OCI-LY7 (cell line): ENCODE measurements at regions of chr7 and their contacts with region 1.

Region 1: GRCh38 chr7:2837496-2837895 is 6.6 kb downstream of the GNA12 start:
- DNase-seq: no peak
- H3K4me3 ChIP-seq: peak overlapping the region; percentile 51
- H3K27ac ChIP-seq: peak overlapping the region; percentile 89
- H3K4me1 ChIP-seq: peaks cover 52% of the 10 kb centered on the region
- CTCF ChIP-seq: no peak

Region 2: DNA sequence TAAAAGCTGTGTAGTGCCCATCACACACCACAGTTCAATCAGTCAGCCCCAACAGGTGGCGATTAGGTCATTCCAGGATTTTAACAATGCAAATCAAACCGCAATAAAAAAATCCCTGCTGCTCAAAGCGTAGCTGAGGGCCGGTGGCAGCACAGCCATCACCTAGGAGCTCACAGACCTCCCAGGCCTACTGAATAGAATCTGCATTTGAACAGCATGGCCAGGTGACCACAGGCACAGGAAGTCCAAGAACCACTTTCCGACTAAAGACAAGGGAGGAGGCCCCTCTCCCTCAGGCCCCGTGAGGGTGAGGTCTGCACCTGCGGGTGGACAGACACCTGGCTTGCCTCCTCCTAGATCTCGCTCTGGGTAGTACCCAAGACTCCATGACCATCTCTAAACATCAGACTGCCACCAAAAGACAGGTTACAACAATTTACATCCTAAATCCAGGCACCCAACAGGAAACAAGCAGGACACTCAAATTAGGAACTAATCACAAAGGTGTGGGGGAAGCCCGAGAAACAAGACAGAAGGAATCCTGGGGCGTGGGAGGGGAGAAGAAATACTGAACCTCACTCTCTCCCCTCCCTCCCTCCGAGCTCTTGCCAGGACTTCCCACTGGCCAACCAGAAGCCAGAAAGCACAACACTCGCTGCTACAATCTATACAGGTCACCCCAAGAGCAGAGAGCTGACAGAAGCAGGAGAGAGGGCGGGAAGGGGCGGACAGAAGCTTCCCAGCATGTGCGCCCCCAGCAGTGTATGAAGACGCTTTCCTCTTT is 12.6 kb before region 1 on chr7:
- CTCF ChIA-PET with region 1: interaction called, 3 read pairs
- POLR2A ChIA-PET with region 1: interaction called, 6 read pairs
- intact Hi-C with region 1: loop called (anchors 1 kb)
- DNase-seq: peak; percentile 85
- H3K4me3 ChIP-seq: peak overlapping the region; percentile 42
- H3K27ac ChIP-seq: peak overlapping the region; percentile 82
- H3K4me1 ChIP-seq: peaks cover 68% of the 10 kb centered on the region
- CTCF ChIP-seq: no peak

Region 3: DNA sequence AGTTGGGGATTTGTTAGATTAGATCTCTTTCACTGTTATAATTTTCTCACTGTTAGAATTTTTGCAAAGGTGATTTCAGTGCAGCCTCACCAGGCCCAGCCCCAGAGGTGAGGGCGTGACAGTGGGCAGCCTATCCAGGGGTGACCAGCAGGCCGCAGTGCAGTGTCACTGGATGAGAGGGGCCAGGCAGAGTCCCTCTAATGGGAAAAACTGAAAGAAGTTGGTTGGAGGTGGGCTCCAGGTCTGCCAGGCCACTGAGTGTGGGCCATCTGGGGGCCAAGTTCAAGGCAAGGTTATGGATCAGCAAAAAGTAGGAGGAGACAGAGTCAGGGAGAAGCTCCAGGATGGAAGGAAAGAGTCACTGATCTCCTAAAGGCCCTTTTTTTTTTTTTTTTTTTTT is 373.0 kb after region 1 on chr7:
- CTCF ChIA-PET with region 1: no interaction called
- POLR2A ChIA-PET with region 1: no interaction called
- intact Hi-C with region 1: no loop called
- DNase-seq: no peak
- H3K4me3 ChIP-seq: no peak overlapping the region
- H3K27ac ChIP-seq: no peak overlapping the region
- H3K4me1 ChIP-seq: no peaks in the 10 kb centered on the region
- CTCF ChIP-seq: no peak